Common myeloid progenitor, CD34-positive (primary cell): ENCODE measurements at regions of chrX and their contacts with region 1.

Region 1: DNA sequence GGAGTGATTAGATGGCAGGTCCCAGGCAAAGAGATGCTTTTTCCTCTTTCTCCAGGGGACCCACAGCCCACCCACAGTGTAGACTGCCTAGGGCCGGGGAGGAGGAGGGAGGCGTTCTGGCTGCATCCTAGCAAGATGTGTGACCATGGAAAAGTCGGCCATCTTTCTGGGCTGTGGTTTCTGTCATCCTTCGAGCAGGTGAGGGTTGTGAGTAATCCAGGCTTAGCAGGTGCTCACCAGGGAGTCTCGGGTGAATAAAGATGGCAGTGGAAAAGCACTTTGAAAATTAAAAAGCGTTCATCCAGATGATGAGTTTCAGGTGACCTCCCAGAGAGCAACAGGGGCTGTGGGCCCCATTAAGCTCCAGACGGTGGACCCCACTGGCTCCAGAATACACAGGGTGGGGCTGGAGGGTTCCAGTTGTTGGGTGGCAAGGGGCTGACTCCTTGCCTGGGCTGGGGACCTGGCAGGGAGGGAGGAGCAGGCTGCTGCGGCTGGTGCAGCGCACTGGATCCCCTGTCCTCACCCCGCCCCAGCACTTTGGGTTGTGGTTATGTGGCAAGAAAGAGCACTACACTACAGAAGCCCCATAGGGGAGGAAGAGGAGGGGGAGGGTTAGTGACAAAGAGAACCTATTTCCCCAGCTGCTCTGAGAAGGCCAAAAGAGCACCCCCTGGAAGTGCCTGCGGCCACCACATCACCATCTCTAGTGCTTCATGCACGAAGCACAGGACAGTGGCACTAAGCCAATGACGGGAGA is 23.7 kb downstream of the ELF4 start:
- DNase-seq: peak; percentile 55 to 86 (median 82)
- H3K4me3 ChIP-seq: peak overlapping the region in 6 of 7 experiments; percentile 19 to 55 (median 36)
- H3K27ac ChIP-seq: peak overlapping the region in 1 of 2 experiments; percentile 50
- H3K4me1 ChIP-seq: peaks cover 11 to 83% (median 74%) of the 10 kb centered on the region in 4 experiments
- H3K27me3 ChIP-seq: no peaks in the 10 kb centered on the region

Region 2: GRCh38 chrX:130097507-130098209 is 11.0 kb after region 1 on chrX:
- CTCF ChIA-PET with region 1: interaction called, 14 read pairs
- POLR2A ChIA-PET with region 1: interaction called, 4 read pairs
- DNase-seq: peak; percentile 71 to 95 (median 93)
- H3K4me3 ChIP-seq: peak overlapping the region in 2 of 7 experiments; percentile 36 to 50
- H3K27ac ChIP-seq: peak overlapping the region in 1 of 2 experiments; percentile 34
- H3K4me1 ChIP-seq: peaks cover 13 to 66% (median 54%) of the 10 kb centered on the region in 4 experiments
- H3K27me3 ChIP-seq: no peaks in the 10 kb centered on the region

Region 3: DNA sequence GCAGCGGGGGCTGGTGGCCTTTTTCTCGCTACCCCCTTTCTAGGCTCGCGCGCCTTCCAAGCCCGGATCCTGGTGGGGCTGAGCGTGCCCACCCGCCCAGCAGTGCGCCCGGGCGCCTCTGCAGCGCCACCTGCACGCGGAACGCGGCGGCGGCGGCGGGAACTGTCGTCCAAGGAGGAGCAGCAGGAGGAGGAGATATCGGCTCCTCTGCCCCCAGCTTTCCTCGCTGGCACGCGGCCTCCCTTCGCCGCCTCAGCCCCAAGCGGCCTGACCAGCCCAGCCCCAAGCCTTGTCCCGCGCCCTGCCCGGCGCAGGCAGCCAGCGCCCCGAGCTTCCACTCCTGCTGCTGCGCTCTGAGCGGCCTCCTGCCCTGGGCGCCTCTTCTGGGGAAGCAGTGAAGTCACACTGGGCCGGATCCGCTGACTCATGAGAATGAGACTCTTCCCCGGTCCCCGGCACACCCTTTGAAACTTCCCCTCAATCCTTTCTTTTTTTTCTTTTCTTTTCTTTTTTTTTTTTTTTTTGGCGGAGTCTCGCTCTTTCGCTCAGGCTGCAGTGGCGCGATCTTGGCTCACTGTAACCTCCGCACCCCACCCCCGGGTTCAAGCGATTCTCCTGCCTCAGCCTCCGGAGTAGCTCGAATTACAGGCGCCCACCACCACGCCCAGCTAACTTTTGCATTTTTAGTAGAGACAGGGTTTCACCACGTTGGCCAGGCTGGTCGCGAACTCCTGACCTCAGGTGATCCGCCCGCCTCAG is 34.3 kb after region 1 on chrX:
- CTCF ChIA-PET with region 1: interaction called, 86 read pairs
- POLR2A ChIA-PET with region 1: interaction called, 6 read pairs
- DNase-seq: peak; percentile 77 to 89 (median 86)
- H3K4me3 ChIP-seq: peak overlapping the region; percentile 26 to 70 (median 50)
- H3K27ac ChIP-seq: no peak overlapping the region
- H3K4me1 ChIP-seq: peaks cover 0 to 34% (median 22%) of the 10 kb centered on the region in 4 experiments
- H3K27me3 ChIP-seq: peaks cover 0 to 6% (median 0%) of the 10 kb centered on the region in 5 experiments